GM12878 (cell line): ENCODE measurements at regions of chr22 and their contacts with region 1.

Region 1: DNA sequence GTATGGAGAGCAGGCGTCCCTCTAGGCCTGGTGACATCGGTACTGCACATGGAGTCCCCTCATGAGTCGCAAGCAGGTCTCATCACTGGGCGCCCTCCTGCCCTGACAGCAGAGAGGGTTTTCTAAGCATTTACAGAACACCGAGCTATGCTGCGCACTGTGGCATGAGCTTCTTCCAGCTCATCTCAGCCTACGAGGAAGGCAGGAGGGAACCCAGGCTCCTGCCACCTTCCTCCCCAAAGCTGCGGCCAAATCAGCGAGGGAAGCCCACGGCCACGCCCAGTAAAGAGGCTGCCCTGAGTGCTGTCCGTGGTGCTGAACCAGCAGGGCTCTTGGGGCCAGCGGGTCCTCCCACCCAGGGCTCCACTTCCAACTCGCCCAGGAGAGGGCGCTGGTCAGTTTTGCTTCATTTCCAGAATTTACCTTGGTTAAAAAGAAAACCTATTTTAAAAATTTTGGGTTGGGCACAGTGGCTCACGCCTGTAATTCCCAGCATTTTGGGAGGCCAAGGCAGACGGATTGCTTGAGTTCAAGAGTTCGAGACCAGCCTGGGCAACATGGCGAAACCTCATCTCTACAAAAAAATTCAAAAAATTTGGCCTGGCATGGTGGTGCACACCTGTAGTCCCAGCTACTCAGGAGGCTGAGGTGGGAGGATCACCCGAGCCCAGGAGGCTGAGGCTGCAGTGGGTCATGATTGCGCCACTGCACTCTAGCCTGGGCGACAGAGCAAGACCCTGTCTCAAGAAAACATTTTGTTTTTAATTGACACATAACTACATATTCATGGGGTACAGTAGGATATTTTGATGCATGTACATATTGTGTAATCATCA is 34.2 kb downstream of the PHF21B start:
- DNase-seq: no peak
- ATAC-seq: peak; percentile 93
- H3K4me3 ChIP-seq: no peak overlapping the region
- H3K27ac ChIP-seq: no peak overlapping the region
- H3K4me1 ChIP-seq: no peaks in the 10 kb centered on the region; the same call in 1 of the 2 replicates
- H3K27me3 ChIP-seq: peaks cover 5 to 6% of the 10 kb centered on the region in 2 experiments; a peak in 3 of 4 replicates
- CTCF ChIP-seq: peak; percentile 70 to 80 (median 76)
- EP300 ChIP-seq: no peak
- POLR2A ChIP-seq: no peak
- RAD21 ChIP-seq: peak; percentile 64

Region 2: DNA sequence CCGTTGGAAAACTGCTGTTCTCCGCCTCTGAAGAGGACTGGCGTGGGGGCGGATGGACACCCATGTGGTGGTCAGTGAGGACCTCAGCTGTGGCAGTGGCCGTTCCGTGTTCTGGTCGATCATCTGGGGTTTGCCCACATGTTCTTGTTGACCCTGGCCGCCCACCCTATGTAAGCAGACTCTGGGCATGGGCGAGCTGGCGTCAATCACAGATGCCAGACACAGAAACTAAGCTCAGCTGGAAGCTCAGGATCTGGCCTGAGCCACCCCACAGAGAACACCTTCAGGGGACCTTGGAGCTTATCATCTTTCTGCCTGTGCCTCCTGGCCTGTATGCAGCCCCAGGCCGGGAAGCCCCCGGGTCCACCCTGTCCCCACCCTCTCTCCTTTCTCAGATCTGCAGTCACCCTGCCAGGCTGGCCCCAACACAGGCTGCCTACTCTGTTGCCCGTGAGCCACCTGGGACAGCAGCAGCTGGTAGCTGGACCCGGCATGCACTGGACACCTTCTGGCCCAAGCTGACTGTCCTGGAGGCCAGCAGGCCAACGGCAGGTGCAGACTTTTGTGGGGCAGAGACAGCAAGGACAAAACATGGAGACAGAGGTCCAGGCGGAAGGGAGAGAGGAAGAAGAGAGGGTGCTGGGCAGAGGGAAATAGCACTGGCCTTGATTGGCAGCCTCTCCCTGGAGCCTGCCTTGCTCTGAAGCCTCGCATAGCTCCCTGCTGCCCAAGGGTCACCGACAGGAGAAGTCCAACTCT is 57.3 kb before region 1 on chr22:
- CTCF ChIA-PET with region 1: no interaction called
- POLR2A ChIA-PET with region 1: no interaction called
- RAD21 ChIA-PET with region 1: no interaction called
- SMC1A ChIA-PET with region 1: no interaction called
- in situ Hi-C with region 1: loop called (anchors 5 kb)
- intact Hi-C with region 1: no loop called
- DNase-seq: no peak
- ATAC-seq: no peak
- H3K4me3 ChIP-seq: no peak overlapping the region
- H3K27ac ChIP-seq: no peak overlapping the region
- H3K4me1 ChIP-seq: no peaks in the 10 kb centered on the region
- H3K27me3 ChIP-seq: no peaks in the 10 kb centered on the region
- CTCF ChIP-seq: no peak
- EP300 ChIP-seq: no peak
- POLR2A ChIP-seq: no peak
- RAD21 ChIP-seq: no peak

Region 3: GRCh38 chr22:44956840-44957767 is 18.5 kb before region 1 on chr22:
- CTCF ChIA-PET with region 1: interaction called, 3 read pairs
- POLR2A ChIA-PET with region 1: interaction called, 3 read pairs
- RAD21 ChIA-PET with region 1: interaction called, 11 read pairs
- SMC1A ChIA-PET with region 1: interaction called, 6 read pairs
- in situ Hi-C with region 1: no loop called
- intact Hi-C with region 1: no loop called
- DNase-seq: no peak
- ATAC-seq: no peak
- H3K4me3 ChIP-seq: no peak overlapping the region
- H3K27ac ChIP-seq: no peak overlapping the region; the same call in 1 of the 2 replicates
- H3K4me1 ChIP-seq: peaks cover 37% of the 10 kb centered on the region
- H3K27me3 ChIP-seq: no peaks in the 10 kb centered on the region
- CTCF ChIP-seq: no peak
- EP300 ChIP-seq: no peak
- POLR2A ChIP-seq: no peak
- RAD21 ChIP-seq: no peak

Region 4: DNA sequence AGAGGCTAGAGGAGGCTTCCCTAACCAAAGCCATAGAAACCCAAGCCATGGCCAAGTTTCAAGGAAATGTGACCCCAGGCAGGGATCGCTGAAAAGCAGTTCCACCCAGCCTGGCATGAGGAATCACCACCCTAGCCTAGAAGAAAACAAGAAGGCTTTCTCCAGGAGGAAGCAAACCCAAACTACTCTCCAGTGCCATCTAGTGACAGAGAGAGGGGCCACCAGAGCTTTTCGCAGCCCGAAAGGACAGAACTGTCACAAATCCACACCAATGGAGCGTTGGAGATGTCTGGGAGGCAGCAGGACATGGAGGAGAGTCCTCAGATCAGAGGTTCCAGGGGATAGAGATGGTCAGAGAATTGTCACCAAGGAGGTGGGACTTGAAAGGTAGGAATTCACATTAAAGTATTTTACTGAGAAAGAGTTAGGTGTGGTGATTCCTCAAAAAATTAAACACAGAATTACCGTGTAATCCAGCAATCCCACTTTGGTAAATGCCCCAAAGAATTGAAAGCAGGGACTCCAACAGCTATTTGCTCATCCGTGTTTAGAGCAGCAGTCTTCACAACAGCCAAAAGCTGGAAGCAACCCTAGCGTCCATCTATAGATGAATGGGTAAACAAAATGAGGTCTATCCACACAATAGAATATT is 120.7 kb after region 1 on chr22:
- CTCF ChIA-PET with region 1: interaction called, 3 read pairs
- POLR2A ChIA-PET with region 1: no interaction called
- RAD21 ChIA-PET with region 1: interaction called, 3 read pairs
- SMC1A ChIA-PET with region 1: interaction called, 3 read pairs
- in situ Hi-C with region 1: no loop called
- intact Hi-C with region 1: loop called (anchors 5 kb)
- DNase-seq: no peak
- ATAC-seq: peak; percentile 82
- H3K4me3 ChIP-seq: no peak overlapping the region
- H3K27ac ChIP-seq: no peak overlapping the region
- H3K4me1 ChIP-seq: no peaks in the 10 kb centered on the region
- H3K27me3 ChIP-seq: no peaks in the 10 kb centered on the region; a peak in 2 of 4 replicates
- CTCF ChIP-seq: peak; percentile 84 to 94 (median 93)
- EP300 ChIP-seq: no peak
- POLR2A ChIP-seq: no peak
- RAD21 ChIP-seq: peak; percentile 78